Heart right ventricle (tissue), 16 donors: ENCODE measurements at regions of chr3 and their contacts with region 1.

Region 1: GRCh38 chr3:3603351-3603750 is 195.9 kb upstream of the LRRN1 start:
- DNase-seq: no peak
- ATAC-seq: no peak
- H3K4me3 ChIP-seq: no peak overlapping the region
- H3K27ac ChIP-seq: no peak overlapping the region
- H3K4me1 ChIP-seq: peaks cover 0 to 3% (median 0%) of the 10 kb centered on the region in 9 donors
- H3K27me3 ChIP-seq: no peaks in the 10 kb centered on the region
- CTCF ChIP-seq: no peak

Region 2: DNA sequence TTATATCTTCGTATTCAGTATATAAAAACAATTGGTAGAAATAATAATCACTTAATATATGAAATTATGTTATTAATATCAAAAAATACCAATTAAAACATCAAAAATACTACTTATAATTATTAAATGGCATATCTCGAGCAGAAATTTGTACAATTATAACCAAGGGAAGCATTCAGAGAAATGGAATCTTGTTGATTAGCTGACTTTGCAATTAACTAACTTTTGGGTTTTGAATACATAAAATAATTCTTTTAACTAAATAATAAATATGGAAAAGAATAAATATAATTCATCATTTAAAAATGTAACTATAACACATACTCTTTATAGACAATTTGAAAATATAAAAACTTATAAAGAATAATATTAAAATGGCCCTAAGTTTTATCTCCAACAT is 35.7 kb after region 1 on chr3:
- intact Hi-C with region 1: loop called in 1 of 10 experiments (anchors 2 kb)
- DNase-seq: no peak
- ATAC-seq: no peak
- H3K4me3 ChIP-seq: no peak overlapping the region
- H3K27ac ChIP-seq: no peak overlapping the region
- H3K4me1 ChIP-seq: no peaks in the 10 kb centered on the region
- H3K27me3 ChIP-seq: no peaks in the 10 kb centered on the region
- CTCF ChIP-seq: no peak

Region 3: DNA sequence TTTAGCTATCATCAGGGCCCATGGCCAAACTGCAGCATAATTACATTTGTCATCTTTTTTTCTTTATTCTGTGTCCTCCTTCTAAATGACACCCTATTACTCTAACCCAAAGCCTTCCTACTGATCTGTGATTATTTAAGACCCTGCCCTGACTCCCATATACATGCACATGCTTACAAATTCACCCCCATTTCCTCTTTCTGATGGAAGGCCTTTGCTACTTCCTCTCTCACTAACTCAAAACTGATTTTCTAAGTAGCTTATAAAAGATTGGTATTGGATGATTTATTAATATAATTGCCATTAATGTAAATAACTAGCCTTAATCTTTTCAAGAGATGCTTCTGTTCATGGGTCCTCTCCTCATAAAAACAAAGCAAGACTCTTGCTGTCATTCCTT is 1763.4 kb after region 1 on chr3:
- intact Hi-C with region 1: no loop called
- DNase-seq: no peak
- ATAC-seq: no peak
- H3K4me3 ChIP-seq: no peak overlapping the region
- H3K27ac ChIP-seq: no peak overlapping the region
- H3K4me1 ChIP-seq: no peaks in the 10 kb centered on the region
- H3K27me3 ChIP-seq: no peaks in the 10 kb centered on the region
- CTCF ChIP-seq: no peak